ENCODE measurements at regions of chr10 and their contacts with region 1.

Region 1: GRCh38 chr10:105121743-105122142 is 480.7 kb downstream of the SORCS3 start:
- DNase-seq: no peak
- H3K4me3 ChIP-seq: no peak overlapping the region
- H3K27ac ChIP-seq: no peak overlapping the region
- H3K4me1 ChIP-seq: no peaks in the 10 kb centered on the region
- H3K27me3 ChIP-seq: no peaks in the 10 kb centered on the region
- CTCF ChIP-seq: no peak
- EP300 ChIP-seq: no peak
- POLR2A ChIP-seq: no peak

Region 2: DNA sequence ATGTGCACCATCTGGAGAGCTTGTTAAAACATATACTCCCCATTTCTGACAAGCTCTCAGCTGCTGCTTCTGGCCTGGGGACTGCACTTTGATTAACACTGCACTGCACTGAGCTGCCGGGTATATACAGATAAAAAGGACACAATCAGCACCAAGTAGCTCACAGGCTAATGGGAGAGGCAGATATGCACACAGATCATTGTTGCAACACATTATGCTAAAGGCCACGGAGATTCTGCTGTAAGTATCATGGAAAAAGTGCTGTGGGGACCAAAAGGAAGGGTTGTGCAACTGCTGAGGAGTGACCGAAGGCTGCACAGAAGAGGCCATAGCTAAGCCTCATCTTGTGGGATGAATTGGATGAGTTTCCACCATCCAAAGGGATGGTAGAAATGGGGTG is 25.4 kb before region 1 on chr10:
- in situ Hi-C with region 1: no loop called
- intact Hi-C with region 1: loop called (anchors 2 kb)
- DNase-seq: no peak
- H3K4me3 ChIP-seq: no peak overlapping the region
- H3K27ac ChIP-seq: no peak overlapping the region
- H3K4me1 ChIP-seq: no peaks in the 10 kb centered on the region
- H3K27me3 ChIP-seq: no peaks in the 10 kb centered on the region
- CTCF ChIP-seq: no peak
- EP300 ChIP-seq: no peak
- POLR2A ChIP-seq: no peak